ENCODE measurements at regions of chr2 and their contacts with region 1.

Region 1: DNA sequence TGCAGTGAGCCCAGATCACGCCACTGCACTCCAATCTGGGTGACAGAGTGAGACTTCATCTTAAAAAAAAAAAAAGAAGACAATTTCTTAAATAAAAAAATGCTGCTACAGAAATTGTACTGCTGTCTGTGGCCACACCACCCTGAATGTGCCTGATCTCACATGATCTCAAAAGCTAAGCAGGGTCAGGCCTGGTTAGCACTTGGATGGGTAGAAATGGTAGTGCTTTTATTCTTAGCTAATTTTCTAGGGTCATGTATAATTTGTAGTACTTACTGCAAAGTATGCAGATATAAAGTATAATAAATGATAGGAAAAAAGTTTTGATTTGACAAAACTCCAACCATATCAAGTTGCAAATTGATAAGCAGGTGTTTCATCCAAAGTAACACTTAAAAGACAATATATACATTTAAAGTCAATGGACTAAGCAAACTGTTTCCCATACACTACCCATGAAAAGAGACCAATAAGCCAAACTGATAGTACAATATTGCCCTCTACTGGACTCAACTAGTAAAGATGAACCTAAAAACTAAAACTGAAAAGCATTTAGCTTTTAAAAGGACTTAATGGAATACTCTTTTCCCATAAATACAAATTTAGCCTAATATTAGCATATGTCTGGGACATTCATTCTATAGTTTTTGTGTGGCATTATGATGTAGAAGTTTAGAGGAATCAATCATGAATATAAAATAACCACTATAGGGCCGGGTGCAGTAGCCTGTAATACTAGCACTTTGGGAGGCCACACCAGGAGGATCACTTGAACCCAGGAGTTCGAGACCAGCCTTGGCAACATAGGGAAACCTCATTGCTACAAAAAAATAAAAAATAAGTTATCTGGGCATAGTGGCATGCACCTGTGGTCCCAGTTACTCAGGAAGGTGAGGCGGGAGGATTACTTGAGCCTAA is 18.6 kb upstream of the PEX13 start:
- H3K4me3 ChIP-seq: no peak overlapping the region
- H3K27ac ChIP-seq: no peak overlapping the region
- H3K4me1 ChIP-seq: no peaks in the 10 kb centered on the region; the same call in 1 of the 2 replicates
- CTCF ChIP-seq: no peak

Region 2: GRCh38 chr2:60707750-60708371 is 291.0 kb before region 1 on chr2:
- CTCF ChIA-PET with region 1: interaction called, 55 read pairs
- POLR2A ChIA-PET with region 1: no interaction called
- H3K4me3 ChIP-seq: no peak overlapping the region
- H3K27ac ChIP-seq: no peak overlapping the region
- H3K4me1 ChIP-seq: no peaks in the 10 kb centered on the region
- CTCF ChIP-seq: no peak

Region 3: GRCh38 chr2:60794277-60794863 is 204.5 kb before region 1 on chr2:
- CTCF ChIA-PET with region 1: interaction called, 20 read pairs
- POLR2A ChIA-PET with region 1: no interaction called
- H3K4me3 ChIP-seq: no peak overlapping the region
- H3K27ac ChIP-seq: no peak overlapping the region
- H3K4me1 ChIP-seq: no peaks in the 10 kb centered on the region
- CTCF ChIP-seq: peak; percentile 31; the same call in 1 of the 2 replicates

Region 4: GRCh38 chr2:60808330-60808801 is 190.5 kb before region 1 on chr2:
- CTCF ChIA-PET with region 1: interaction called, 19 read pairs
- POLR2A ChIA-PET with region 1: no interaction called
- H3K4me3 ChIP-seq: no peak overlapping the region
- H3K27ac ChIP-seq: no peak overlapping the region
- H3K4me1 ChIP-seq: peaks cover 2% of the 10 kb centered on the region; the same call in 1 of the 2 replicates
- CTCF ChIP-seq: no peak